Activated B cell treated with CpG ODN at 0.5 μM for 24 hours (primary cell): ENCODE measurements at regions of chr12 and their contacts with region 1.

Region 1: GRCh38 chr12:111428728-111429175 is 23.0 kb downstream of the SH2B3 start:
- DNase-seq: no peak
- ATAC-seq: no peak
- H3K4me3 Mint-ChIP-seq: peak overlapping the region; percentile 65
- H3K27ac Mint-ChIP-seq: no peak overlapping the region
- H3K4me1 Mint-ChIP-seq: peaks cover 87% of the 10 kb centered on the region
- H3K27me3 Mint-ChIP-seq: no peaks in the 10 kb centered on the region
- CTCF ChIP-seq: no peak

Region 2: DNA sequence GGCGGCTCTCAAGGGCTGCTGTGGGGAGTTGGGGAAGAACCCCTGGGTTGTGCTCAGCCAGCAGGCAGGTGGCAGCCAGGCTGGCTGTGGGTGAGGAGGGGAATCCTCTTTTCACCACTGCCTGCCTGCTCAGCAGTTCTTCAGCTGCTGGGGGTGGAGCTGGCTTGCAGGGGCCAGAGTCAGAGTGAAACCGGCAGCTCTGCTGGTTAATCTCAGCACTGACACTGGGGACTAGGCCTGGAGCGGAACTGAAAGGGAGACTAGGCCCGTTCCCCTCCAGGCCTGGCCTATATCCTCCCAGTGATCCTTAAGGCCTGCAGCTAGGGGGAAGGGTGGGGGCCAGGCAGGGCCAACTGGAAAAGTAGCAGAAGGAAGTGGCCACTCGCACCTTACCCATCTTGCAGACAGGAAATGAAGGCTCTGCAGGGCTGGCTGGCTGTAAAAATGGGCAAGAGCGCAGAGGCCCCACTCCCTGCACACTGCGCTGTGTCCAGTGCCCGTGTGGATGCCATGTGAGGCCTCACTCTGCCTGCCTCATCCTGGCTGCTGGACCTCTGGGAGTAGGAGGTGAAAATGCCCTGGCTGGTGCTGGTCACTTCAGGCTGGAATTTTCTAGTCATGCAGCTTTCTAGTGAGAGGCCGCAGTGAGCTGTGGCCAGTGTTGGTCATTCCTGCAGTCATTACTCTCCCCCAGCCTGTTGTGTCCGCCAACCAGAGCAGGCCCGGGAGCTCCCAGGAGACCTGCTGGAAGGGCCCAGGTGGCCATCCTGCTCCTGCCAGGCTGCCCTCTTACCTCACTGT is 16.4 kb after region 1 on chr12:
- CTCF ChIA-PET with region 1: interaction called, 28 read pairs
- POLR2A ChIA-PET with region 1: interaction called, 122 read pairs
- intact Hi-C with region 1: loop called (anchors 1 kb)
- DNase-seq: peak; percentile 75
- ATAC-seq: peak; percentile 93
- H3K4me3 Mint-ChIP-seq: peak overlapping the region; percentile 48
- H3K27ac Mint-ChIP-seq: peak overlapping the region; percentile 78
- H3K4me1 Mint-ChIP-seq: peaks cover 85% of the 10 kb centered on the region
- H3K27me3 Mint-ChIP-seq: no peaks in the 10 kb centered on the region
- CTCF ChIP-seq: no peak

Region 3: GRCh38 chr12:111462210-111462769 is 33.5 kb after region 1 on chr12:
- CTCF ChIA-PET with region 1: no interaction called
- POLR2A ChIA-PET with region 1: interaction called, 12 read pairs
- intact Hi-C with region 1: no loop called
- DNase-seq: no peak
- ATAC-seq: no peak
- H3K4me3 Mint-ChIP-seq: no peak overlapping the region
- H3K27ac Mint-ChIP-seq: peak overlapping the region; percentile 56
- H3K4me1 Mint-ChIP-seq: peaks cover 5% of the 10 kb centered on the region
- H3K27me3 Mint-ChIP-seq: no peaks in the 10 kb centered on the region
- CTCF ChIP-seq: no peak

Region 4: GRCh38 chr12:111529424-111530368 is 100.9 kb after region 1 on chr12:
- CTCF ChIA-PET with region 1: no interaction called
- POLR2A ChIA-PET with region 1: interaction called, 12 read pairs
- intact Hi-C with region 1: no loop called
- DNase-seq: peak; percentile 41
- ATAC-seq: peak; percentile 86
- H3K4me3 Mint-ChIP-seq: no peak overlapping the region
- H3K27ac Mint-ChIP-seq: no peak overlapping the region
- H3K4me1 Mint-ChIP-seq: no peaks in the 10 kb centered on the region
- H3K27me3 Mint-ChIP-seq: no peaks in the 10 kb centered on the region
- CTCF ChIP-seq: no peak